Sigmoid colon (tissue), 7 donors: ENCODE measurements at regions of chr17 and their contacts with region 1.

Region 1: DNA sequence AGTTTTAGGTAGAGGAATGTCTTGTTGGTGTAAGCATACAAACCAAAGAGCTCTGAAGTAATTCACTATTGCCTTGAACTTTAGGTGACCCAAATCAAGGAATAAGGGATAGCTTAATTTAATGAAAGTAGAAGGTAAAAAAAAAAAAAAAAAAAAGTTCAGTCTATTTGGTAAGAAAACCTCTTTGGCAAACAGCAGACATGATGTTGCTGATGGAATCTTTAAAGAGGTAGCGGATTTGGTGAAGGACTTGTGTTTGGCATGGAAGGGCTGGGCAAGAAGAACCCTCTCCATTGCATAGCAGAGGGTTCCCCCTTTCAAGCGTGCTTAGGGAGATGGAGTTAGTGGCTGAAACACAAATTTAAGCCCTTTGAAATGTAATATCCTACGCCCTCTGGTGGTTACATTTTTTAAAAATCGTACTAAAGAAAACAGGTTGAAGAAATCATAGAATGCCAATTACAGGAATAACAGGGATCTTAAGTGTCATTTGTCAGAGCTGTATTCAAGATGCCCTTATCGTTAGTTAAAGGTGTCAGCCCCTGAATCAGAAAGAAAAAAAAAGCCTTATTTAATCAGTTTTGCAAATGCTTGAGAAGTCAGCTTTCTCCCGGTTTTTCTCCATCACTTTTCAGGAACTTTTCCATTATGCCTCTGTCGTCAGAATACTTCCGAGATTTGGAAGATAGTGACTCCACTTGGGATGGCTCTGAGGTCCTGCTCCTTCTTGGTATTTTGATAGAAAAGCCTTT is 383.1 kb downstream of the KCNJ2 start:
- DNase-seq: no peak
- H3K4me3 ChIP-seq: no peak overlapping the region
- H3K27ac ChIP-seq: no peak overlapping the region
- H3K4me1 ChIP-seq: no peaks in the 10 kb centered on the region
- H3K27me3 ChIP-seq: peaks cover 0 to 3% (median 0%) of the 10 kb centered on the region in 3 donors
- CTCF ChIP-seq: peak in 3 of 4 experiments; percentile 36 to 57 (median 41)
- EP300 ChIP-seq: no peak
- POLR2A ChIP-seq: no peak

Region 2: DNA sequence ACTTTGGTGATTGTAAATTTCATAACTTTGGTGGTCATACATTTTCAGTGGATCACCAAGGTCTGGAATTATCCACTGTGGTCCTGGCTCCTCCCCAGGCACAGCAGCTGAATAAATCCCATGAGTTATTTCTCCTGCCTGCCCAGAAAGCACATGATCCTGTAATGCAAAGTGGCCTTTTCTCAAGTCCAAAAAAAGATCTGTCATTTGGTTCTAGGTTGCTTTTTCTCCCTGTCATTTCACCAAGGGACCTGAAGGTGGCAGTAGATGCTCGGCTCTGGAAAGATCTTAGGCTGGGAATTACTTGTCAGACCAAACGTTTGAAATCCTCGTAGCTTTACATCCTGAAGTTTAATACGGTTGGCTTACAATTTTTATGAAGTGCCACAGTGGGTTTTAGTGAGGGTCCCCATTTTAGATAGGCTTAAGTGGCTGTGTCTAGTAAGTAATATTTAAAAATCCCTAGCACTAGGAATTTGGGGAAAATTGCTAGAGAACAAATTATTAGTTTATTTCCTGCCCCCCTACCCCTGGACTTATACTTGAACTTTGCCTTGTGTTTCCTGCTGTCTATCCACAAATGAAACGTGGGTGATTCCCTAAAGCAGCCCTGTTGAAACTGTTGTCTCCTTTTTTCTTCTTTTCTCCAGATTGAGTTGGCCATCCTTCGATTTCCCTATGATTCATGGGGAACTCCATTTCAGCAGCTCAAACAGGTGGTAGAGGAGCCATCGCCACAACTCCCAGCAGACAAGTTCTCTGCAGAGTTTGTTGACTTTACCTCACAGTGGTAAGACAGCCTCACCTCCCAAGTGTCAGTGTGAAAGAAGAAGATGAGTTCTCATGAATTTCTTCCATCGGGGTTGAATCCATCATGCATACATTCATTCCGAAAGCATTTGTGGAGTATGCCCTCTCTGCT is 1026.2 kb before region 1 on chr17:
- intact Hi-C with region 1: loop called (anchors 5 kb)
- DNase-seq: peak; percentile 64
- H3K4me3 ChIP-seq: no peak overlapping the region
- H3K27ac ChIP-seq: no peak overlapping the region
- H3K4me1 ChIP-seq: no peaks in the 10 kb centered on the region
- H3K27me3 ChIP-seq: no peaks in the 10 kb centered on the region
- CTCF ChIP-seq: peak; percentile 69 to 82 (median 78)
- EP300 ChIP-seq: no peak
- POLR2A ChIP-seq: no peak

Region 3: DNA sequence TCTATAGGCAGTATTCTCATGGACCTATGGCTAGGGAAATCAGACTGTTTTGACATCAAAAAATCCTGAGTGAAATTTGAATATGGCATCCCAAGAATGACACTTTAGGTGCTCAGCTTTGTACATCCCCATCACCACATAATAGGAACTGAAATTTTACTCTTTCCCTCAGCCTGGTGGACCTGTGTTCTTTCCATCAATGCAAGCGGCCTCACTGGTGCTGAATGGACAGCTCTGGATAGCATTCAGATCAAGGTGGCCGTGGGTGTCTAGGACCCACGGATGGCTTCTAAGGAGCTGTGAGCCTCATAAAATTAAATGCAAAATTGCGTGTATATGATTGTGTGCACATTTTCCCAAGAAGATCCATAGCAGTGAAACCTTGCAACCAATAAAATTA is 985.3 kb before region 1 on chr17:
- intact Hi-C with region 1: loop called (anchors 5 kb)
- DNase-seq: no peak
- H3K4me3 ChIP-seq: no peak overlapping the region
- H3K27ac ChIP-seq: no peak overlapping the region
- H3K4me1 ChIP-seq: peaks cover 0 to 5% (median 0%) of the 10 kb centered on the region in 4 donors
- H3K27me3 ChIP-seq: no peaks in the 10 kb centered on the region
- CTCF ChIP-seq: no peak
- EP300 ChIP-seq: no peak
- POLR2A ChIP-seq: no peak

Region 4: GRCh38 chr17:69607162-69607834 is 945.1 kb before region 1 on chr17:
- intact Hi-C with region 1: loop called (anchors 5 kb)
- DNase-seq: peak; percentile 85
- H3K4me3 ChIP-seq: no peak overlapping the region
- H3K27ac ChIP-seq: peak overlapping the region in 3 of 4 donors; percentile 45 to 72 (median 71)
- H3K4me1 ChIP-seq: peaks cover 0 to 44% (median 36%) of the 10 kb centered on the region in 4 donors
- H3K27me3 ChIP-seq: no peaks in the 10 kb centered on the region
- CTCF ChIP-seq: peak; percentile 43 to 83 (median 77)
- EP300 ChIP-seq: no peak
- POLR2A ChIP-seq: no peak

Region 5: GRCh38 chr17:70169709-70170597 is 382.5 kb before region 1 on chr17:
- intact Hi-C with region 1: loop called (anchors 5 kb)
- DNase-seq: peak; percentile 64
- H3K4me3 ChIP-seq: peak overlapping the region; percentile 45 to 68 (median 63)
- H3K27ac ChIP-seq: peak overlapping the region; percentile 56 to 88 (median 86)
- H3K4me1 ChIP-seq: peaks cover 0 to 22% (median 13%) of the 10 kb centered on the region in 4 donors
- H3K27me3 ChIP-seq: peaks cover 0 to 12% (median 6%) of the 10 kb centered on the region in 3 donors
- CTCF ChIP-seq: no peak
- EP300 ChIP-seq: no peak
- POLR2A ChIP-seq: no peak

Region 6: DNA sequence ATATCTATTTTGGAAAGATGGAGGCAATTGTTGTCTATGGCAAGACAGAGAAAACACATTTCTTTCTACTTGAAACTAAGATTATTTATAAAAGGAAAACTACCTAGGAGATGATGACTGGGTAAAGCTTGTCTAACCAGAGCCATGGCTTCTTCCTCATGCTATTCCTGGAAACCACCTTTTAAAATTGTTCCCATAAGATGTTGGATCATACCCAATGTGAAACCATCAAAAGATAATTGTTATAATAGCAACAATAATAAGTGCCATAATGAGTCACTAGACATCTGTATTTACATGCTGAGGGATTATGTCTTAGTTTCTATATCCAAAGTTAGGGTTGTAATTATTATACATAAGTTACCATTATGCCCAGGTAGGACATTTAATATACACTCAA is 45.4 kb after region 1 on chr17:
- intact Hi-C with region 1: no loop called
- DNase-seq: no peak
- H3K4me3 ChIP-seq: no peak overlapping the region
- H3K27ac ChIP-seq: no peak overlapping the region
- H3K4me1 ChIP-seq: no peaks in the 10 kb centered on the region
- H3K27me3 ChIP-seq: no peaks in the 10 kb centered on the region
- CTCF ChIP-seq: no peak
- EP300 ChIP-seq: no peak
- POLR2A ChIP-seq: no peak